GM12878 (cell line): ENCODE measurements at regions of chr11 and their contacts with region 1.

Region 1: GRCh38 chr11:73597956-73598718 is at the start of gene FAM168A:
- DNase-seq: peak; percentile 86
- ATAC-seq: peak; percentile 96
- H3K4me3 ChIP-seq: peak within 1 kb of the TSS; percentile 77
- H3K27ac ChIP-seq: peak within 1 kb of the TSS; percentile 50
- H3K4me1 ChIP-seq: no peaks in the 10 kb centered on the region
- H3K27me3 ChIP-seq: no peaks in the 10 kb centered on the region
- CTCF ChIP-seq: peak in 2 of 3 experiments; percentile 11 to 26; a peak in 2 of 6 replicates
- EP300 ChIP-seq: no peak
- POLR2A ChIP-seq: peak; percentile 71
- RAD21 ChIP-seq: peak; percentile 8; the same call in 1 of the 2 replicates
- polyA plus RNA-seq, gene FAM168A: 1.7 to 1.8 TPM

Region 2: GRCh38 chr11:73538381-73538872 is 59.7 kb before region 1 on chr11:
- CTCF ChIA-PET with region 1: no interaction called
- POLR2A ChIA-PET with region 1: interaction called, 5 read pairs
- RAD21 ChIA-PET with region 1: no interaction called
- SMC1A ChIA-PET with region 1: interaction called, 14 read pairs
- in situ Hi-C with region 1: no loop called
- intact Hi-C with region 1: no loop called
- DNase-seq: peak; percentile 53
- ATAC-seq: peak; percentile 98
- H3K4me3 ChIP-seq: 0 out of 2 replicates have a peak overlapping the region, but pooled peaks have one; percentile 0
- H3K27ac ChIP-seq: peak overlapping the region; percentile 76
- H3K4me1 ChIP-seq: peaks cover 13% of the 10 kb centered on the region
- H3K27me3 ChIP-seq: no peaks in the 10 kb centered on the region
- CTCF ChIP-seq: no peak
- EP300 ChIP-seq: no peak
- POLR2A ChIP-seq: no peak
- RAD21 ChIP-seq: no peak

Region 3: DNA sequence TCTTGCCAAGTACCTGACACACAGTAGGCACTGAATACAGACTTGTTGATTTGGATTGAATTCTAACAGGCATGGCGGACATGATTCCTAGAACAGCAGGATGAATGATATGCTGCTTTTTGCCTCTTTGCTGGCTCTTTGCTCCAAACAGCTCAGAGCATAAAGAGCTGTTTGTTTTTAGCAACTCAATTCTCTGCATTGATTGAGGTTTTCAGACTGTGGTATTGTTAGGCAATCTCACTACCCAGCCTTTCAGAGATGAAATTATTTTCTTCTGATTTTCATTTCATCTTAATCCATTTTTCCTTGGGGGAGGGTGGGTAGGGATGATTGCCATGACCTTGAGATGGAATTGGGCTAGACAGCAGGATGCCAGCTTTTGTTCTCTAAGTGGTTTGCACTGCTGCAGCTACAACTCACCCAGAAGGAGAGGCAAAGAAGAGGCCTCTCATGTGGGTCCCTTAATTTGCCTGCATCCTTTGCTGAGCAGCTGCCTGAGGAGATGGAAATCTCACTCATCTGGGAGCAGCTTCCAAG is 258.0 kb after region 1 on chr11:
- CTCF ChIA-PET with region 1: no interaction called
- POLR2A ChIA-PET with region 1: no interaction called
- RAD21 ChIA-PET with region 1: no interaction called
- SMC1A ChIA-PET with region 1: no interaction called
- in situ Hi-C with region 1: no loop called
- intact Hi-C with region 1: no loop called
- DNase-seq: no peak
- ATAC-seq: no peak
- H3K4me3 ChIP-seq: no peak overlapping the region
- H3K27ac ChIP-seq: no peak overlapping the region
- H3K4me1 ChIP-seq: no peaks in the 10 kb centered on the region
- H3K27me3 ChIP-seq: no peaks in the 10 kb centered on the region
- CTCF ChIP-seq: no peak
- EP300 ChIP-seq: no peak
- POLR2A ChIP-seq: no peak
- RAD21 ChIP-seq: no peak